AG04449 (cell line): ENCODE measurements at regions of chr19 and their contacts with region 1.

Region 1: DNA sequence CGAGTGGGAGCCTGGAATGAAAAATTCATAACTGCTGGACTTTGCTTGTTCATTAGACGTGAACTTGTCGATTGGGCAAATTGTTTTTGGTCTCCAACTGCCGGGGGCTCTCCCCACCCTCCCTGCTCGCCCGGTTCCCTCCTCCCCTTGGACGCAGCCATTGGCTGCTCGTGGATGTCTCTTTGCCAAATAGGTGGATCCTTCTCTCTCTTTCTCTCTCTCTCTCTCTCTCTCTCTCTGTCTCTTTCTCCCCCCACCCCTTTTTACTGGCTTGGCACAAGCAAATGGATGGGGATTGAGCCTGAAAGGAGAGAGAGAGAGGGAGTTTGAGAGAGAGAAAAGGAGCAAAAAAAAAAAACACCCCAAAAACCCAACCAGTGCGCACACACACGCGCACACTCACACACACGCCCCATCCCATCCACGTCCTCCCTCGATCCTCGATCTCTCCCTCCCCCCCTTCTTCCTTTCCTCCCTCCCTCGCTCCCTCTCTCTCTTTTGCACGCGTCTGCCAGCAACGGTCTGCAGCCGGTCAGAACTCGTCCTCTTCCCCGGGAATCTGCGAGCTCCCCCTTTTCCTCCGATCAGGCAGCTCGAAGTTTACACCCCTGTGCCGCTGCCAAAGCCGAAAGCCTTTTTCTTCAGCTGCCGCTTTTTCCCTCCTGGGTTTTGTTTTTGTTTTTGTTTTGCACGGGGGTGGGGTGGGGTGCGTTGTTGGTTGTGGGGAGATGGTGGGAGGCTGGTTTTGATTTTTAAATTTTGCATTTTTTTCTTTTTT is 27.8 kb downstream of the NFIX start:
- DNase-seq: peak; percentile 88
- H3K4me3 ChIP-seq: peak overlapping the region; percentile 65
- CTCF ChIP-seq: no peak

Region 2: GRCh38 chr19:13007292-13008045 is 15.6 kb before region 1 on chr19:
- CTCF ChIA-PET with region 1: interaction called, 13 read pairs
- POLR2A ChIA-PET with region 1: interaction called, 3 read pairs
- DNase-seq: no peak
- H3K4me3 ChIP-seq: no peak overlapping the region
- CTCF ChIP-seq: peak; percentile 4

Region 3: GRCh38 chr19:13051267-13052165 is 28.5 kb after region 1 on chr19:
- CTCF ChIA-PET with region 1: interaction called, 427 read pairs
- POLR2A ChIA-PET with region 1: interaction called, 18 read pairs
- DNase-seq: no peak
- H3K4me3 ChIP-seq: no peak overlapping the region
- CTCF ChIP-seq: no peak